CD4-positive, alpha-beta T cell (primary cell): ENCODE measurements at regions of chr5 and their contacts with region 1.

Region 1: DNA sequence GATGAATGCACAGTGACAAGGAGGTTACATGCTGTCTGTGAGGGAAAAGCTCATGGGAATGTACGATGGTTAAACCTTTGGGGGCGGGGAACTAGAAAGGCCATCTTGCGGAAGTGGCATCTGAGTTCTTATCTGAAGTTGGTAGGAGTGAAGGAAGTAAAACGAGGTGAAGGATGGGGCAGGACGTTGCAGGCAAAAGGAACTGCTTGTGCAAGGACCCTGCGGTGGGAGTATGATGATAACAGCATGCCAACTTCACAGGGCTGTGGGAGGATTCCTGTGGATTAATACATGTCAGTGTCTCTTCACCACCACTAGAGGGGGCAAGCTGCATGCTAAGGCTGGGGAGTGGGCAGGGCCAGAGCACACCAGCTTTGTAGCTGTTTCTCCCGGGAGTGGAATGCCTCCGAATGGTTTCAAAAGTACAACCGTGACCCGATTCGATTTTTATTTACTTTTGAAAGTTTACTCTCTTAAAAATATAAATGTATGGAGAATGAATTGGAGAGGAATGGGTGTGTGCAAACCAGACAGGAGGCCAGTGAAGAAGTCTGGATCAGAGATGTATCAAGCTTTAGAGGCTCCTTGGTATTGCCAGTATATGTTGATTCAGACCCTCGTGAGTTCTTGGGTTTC is 62.5 kb downstream of the CYFIP2 start:
- DNase-seq: peak in 13 of 14 experiments; percentile 28 to 86 (median 45)
- ATAC-seq: peak; percentile 88
- H3K4me3 ChIP-seq: no peak overlapping the region
- H3K4me3 Mint-ChIP-seq: peak overlapping the region; percentile 70
- H3K27ac ChIP-seq: peak overlapping the region; percentile 12 to 71
- H3K27ac Mint-ChIP-seq: peak overlapping the region; percentile 89
- H3K4me1 ChIP-seq: peaks cover 32% of the 10 kb centered on the region
- H3K4me1 Mint-ChIP-seq: peaks cover 41% of the 10 kb centered on the region
- H3K27me3 ChIP-seq: no peaks in the 10 kb centered on the region
- H3K27me3 Mint-ChIP-seq: no peaks in the 10 kb centered on the region
- CTCF ChIP-seq: peak; percentile 89

Region 2: GRCh38 chr5:157159209-157159751 is 169.1 kb before region 1 on chr5:
- CTCF ChIA-PET with region 1: no interaction called
- POLR2A ChIA-PET with region 1: interaction called, 5 read pairs
- intact Hi-C with region 1: loop called in 1 of 2 experiments (anchors 5 kb)
- DNase-seq: peak in 11 of 14 experiments; percentile 23 to 90 (median 44)
- ATAC-seq: peak; percentile 80
- H3K4me3 ChIP-seq: no peak overlapping the region
- H3K4me3 Mint-ChIP-seq: peak overlapping the region; percentile 54
- H3K27ac ChIP-seq: peak overlapping the region; percentile 79 to 93
- H3K27ac Mint-ChIP-seq: peak overlapping the region; percentile 65
- H3K4me1 ChIP-seq: peaks cover 39% of the 10 kb centered on the region
- H3K4me1 Mint-ChIP-seq: peaks cover 69% of the 10 kb centered on the region
- H3K27me3 ChIP-seq: no peaks in the 10 kb centered on the region
- H3K27me3 Mint-ChIP-seq: no peaks in the 10 kb centered on the region
- CTCF ChIP-seq: no peak

Region 3: DNA sequence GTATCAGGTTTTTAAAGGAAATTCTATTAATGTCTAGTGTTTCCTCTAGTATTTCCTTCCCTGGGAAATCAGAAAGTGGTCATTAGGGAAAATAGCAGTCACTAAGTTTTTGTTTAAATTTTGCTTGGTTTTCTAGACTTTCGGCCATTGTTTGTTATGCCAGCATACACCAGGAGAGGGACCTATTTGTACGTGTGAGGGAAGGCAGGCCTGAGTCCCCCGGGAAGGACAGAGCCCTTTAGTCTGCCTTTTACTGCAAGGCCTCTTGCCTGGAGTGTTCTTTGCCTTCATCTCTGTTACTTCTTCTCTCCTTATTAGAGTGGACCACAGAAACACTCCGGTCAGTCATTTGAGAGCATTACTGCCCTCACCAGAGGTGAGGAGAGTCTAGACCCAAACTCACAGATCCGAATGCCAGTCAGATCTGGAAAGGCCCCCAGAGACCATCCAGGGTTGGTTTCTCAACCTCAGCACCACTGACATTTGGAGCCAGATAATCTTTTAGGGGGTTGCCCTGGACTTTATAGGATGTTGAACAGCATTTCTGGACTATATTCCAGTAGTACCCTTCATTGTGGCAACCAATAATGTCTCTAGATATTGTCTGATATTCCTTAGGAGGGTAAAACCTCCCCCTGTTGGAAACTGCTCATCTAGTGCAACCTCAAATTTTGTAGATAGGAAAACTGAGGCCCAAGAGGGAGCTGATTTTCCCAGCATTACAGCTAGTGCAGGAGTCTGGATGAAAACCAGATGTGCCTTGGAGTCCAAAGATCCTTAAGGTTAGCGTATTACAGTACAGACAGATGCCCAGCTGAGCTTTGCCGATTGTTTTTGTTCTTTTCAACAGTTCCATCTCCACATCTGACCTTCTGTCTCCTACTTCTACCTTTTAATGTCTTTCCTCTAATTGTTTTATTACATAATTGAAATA is 38.6 kb after region 1 on chr5:
- CTCF ChIA-PET with region 1: no interaction called
- POLR2A ChIA-PET with region 1: no interaction called
- intact Hi-C with region 1: loop called in 1 of 2 experiments (anchors 5 kb)
- DNase-seq: no peak
- ATAC-seq: no peak
- H3K4me3 ChIP-seq: no peak overlapping the region
- H3K4me3 Mint-ChIP-seq: no peak overlapping the region
- H3K27ac ChIP-seq: no peak overlapping the region
- H3K27ac Mint-ChIP-seq: peak overlapping the region; percentile 63
- H3K4me1 ChIP-seq: no peaks in the 10 kb centered on the region
- H3K4me1 Mint-ChIP-seq: peaks cover 17% of the 10 kb centered on the region
- H3K27me3 ChIP-seq: no peaks in the 10 kb centered on the region
- H3K27me3 Mint-ChIP-seq: no peaks in the 10 kb centered on the region
- CTCF ChIP-seq: no peak

Region 4: DNA sequence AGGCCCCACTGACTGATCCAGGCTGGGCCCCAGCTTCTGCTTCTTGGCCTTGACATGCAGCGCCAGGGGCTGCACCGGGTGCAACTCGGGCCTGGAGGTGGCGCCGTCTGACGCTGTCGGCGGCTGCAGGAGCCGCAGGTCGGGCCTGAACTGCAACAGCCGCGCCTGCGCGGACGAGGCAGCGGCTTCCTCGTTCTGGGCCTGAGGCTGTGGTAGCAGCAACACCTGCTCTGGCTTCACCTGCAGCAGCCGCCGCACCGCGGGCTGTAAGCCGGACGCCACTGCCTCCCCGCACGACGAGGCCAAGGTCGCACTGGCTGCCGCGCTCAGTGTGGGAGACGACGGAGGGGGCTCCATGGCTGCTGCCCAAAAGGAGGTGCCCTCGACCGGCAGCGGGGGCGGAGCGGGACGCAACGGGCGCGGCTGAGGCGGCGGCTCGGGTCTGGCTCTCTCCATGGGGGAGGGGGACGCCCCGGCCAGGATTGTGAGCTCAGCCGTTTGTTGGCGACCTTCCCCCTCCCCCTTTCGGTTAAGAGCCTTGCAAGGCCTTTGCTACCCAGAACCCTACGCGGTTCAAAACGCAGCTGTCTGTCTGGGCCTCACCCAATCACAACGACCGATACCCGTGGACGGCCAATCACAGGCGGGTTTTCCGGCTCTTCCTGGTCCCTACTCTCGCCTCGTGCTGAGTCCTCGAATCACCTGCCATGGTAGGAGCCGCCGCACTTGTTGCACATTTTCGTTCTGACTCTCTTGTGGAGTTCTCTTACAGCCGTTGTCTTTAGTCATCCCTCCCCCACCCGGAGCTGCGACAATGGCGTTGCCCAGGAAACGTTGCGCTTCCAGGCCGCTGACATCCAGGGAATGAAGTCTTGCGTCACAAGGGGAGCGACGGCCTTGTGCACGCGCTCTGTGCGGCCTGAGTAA is 323.5 kb after region 1 on chr5 and contains the start of gene SOX30:
- CTCF ChIA-PET with region 1: no interaction called
- POLR2A ChIA-PET with region 1: no interaction called
- intact Hi-C with region 1: loop called in 1 of 2 experiments (anchors 5 kb)
- DNase-seq: peak; percentile 70 to 94 (median 81)
- ATAC-seq: peak; percentile 99
- H3K4me3 ChIP-seq: peak within 1 kb of the TSS; percentile 49
- H3K4me3 Mint-ChIP-seq: peak within 1 kb of the TSS; percentile 81
- H3K27ac ChIP-seq: peak within 1 kb of the TSS in 1 of 2 donors; percentile 13
- H3K27ac Mint-ChIP-seq: peak within 1 kb of the TSS; percentile 78
- H3K4me1 ChIP-seq: peaks cover 17% of the 10 kb centered on the region
- H3K4me1 Mint-ChIP-seq: peaks cover 21% of the 10 kb centered on the region
- H3K27me3 ChIP-seq: no peaks in the 10 kb centered on the region
- H3K27me3 Mint-ChIP-seq: no peaks in the 10 kb centered on the region
- CTCF ChIP-seq: peak; percentile 51
- total RNA-seq, gene SOX30: not detected